Activated CD8-positive, alpha-beta memory T cell treated with anti-CD3 and anti-CD28 coated beads, Interleukin-2, amount 10 ng/mL, durations not matched to agents 7 days and 5 days (primary cell): ENCODE measurements at regions of chr3 and their contacts with region 1.

Region 1: GRCh38 chr3:123723522-123724168 is 138.8 kb upstream of the HACD2 start:
- DNase-seq: peak; percentile 71
- ATAC-seq: peak; percentile 85
- H3K4me3 Mint-ChIP-seq: no peak overlapping the region
- H3K27ac Mint-ChIP-seq: no peak overlapping the region
- H3K4me1 Mint-ChIP-seq: no peaks in the 10 kb centered on the region
- H3K27me3 Mint-ChIP-seq: peaks cover 19% of the 10 kb centered on the region

Region 2: GRCh38 chr3:123642182-123642956 is 81.3 kb before region 1 on chr3:
- CTCF ChIA-PET with region 1: interaction called, 38 read pairs
- DNase-seq: peak; percentile 77
- ATAC-seq: peak; percentile 80
- H3K4me3 Mint-ChIP-seq: no peak overlapping the region
- H3K27ac Mint-ChIP-seq: no peak overlapping the region
- H3K4me1 Mint-ChIP-seq: no peaks in the 10 kb centered on the region
- H3K27me3 Mint-ChIP-seq: no peaks in the 10 kb centered on the region

Region 3: GRCh38 chr3:123652346-123652984 is 71.2 kb before region 1 on chr3:
- CTCF ChIA-PET with region 1: interaction called, 21 read pairs
- DNase-seq: peak; percentile 53
- ATAC-seq: peak; percentile 66
- H3K4me3 Mint-ChIP-seq: no peak overlapping the region
- H3K27ac Mint-ChIP-seq: no peak overlapping the region
- H3K4me1 Mint-ChIP-seq: no peaks in the 10 kb centered on the region
- H3K27me3 Mint-ChIP-seq: no peaks in the 10 kb centered on the region

Region 4: DNA sequence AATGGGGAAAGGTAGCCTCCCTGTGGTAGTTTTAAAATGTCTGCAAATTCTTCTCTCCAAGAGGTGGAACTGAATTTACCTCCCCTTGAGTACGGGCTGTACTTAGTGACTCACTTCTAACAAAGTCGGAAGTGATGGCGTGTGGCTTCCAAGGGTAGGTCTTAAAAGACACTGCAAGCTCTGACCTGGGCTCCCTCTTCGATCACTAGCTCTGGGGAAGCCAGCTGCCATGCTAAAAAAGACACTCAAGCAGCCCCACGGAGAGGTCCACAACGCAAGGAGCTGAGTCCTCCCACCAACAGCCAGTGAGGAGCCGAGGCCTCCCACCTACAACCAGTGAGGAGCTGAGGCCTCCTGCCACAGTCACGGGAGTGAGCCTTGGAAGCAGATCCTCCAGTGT is 16.8 kb before region 1 on chr3:
- CTCF ChIA-PET with region 1: interaction called, 11 read pairs
- DNase-seq: no peak
- ATAC-seq: no peak
- H3K4me3 Mint-ChIP-seq: no peak overlapping the region
- H3K27ac Mint-ChIP-seq: no peak overlapping the region
- H3K4me1 Mint-ChIP-seq: no peaks in the 10 kb centered on the region
- H3K27me3 Mint-ChIP-seq: no peaks in the 10 kb centered on the region